ENCODE measurements at regions of chr11 and their contacts with region 1.

Region 1: GRCh38 chr11:2420502-2421225 is 20.1 kb downstream of the TSSC4 start:
- DNase-seq: peak; percentile 75
- ATAC-seq: peak; percentile 93
- H3K4me3 Mint-ChIP-seq: no peak overlapping the region
- H3K27ac Mint-ChIP-seq: no peak overlapping the region
- H3K4me1 Mint-ChIP-seq: no peaks in the 10 kb centered on the region
- H3K27me3 Mint-ChIP-seq: no peaks in the 10 kb centered on the region

Region 2: DNA sequence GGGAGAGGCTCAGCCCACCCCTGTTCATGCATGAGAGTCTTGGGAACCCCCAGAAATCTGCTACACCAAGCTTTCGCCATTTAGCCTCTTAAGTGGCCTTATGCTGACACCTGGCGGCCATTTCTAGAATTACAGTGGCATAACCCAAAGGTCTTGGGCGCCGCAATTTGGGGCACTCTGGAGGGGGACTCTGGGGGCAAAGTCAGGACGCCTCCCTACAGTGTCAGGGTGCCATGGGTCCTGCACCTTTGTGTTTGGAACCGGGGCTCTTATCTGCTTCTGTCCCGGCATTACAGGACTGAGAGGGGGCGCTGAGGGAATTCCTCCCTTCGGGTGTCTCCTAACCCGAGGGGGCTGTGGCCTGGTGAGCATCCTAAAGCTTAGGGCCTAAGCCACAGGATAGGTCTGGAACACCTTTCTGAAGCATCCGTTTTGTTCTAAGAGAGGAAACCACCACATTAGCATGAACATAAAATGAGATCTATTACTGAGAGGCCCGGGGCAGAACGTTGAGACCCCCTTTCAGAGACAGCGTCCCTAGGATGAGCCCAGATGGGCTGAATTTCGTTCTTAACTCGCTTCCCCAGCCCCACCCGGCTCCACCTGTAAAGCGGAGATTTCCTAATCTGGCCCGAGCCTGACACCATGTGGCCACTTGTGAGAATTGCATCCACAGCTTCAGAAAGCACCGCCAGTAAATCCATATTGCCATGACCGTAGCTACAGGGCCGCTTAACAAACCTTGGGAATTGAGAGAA is 269.0 kb before region 1 on chr11:
- CTCF ChIA-PET with region 1: interaction called, 11 read pairs
- DNase-seq: peak; percentile 85
- ATAC-seq: peak; percentile 77
- H3K4me3 Mint-ChIP-seq: no peak overlapping the region
- H3K27ac Mint-ChIP-seq: no peak overlapping the region
- H3K4me1 Mint-ChIP-seq: peaks cover 3% of the 10 kb centered on the region
- H3K27me3 Mint-ChIP-seq: peaks cover 37% of the 10 kb centered on the region

Region 3: GRCh38 chr11:2196970-2197770 is 223.5 kb before region 1 on chr11:
- CTCF ChIA-PET with region 1: interaction called, 45 read pairs
- DNase-seq: peak; percentile 83
- ATAC-seq: peak; percentile 86
- H3K4me3 Mint-ChIP-seq: no peak overlapping the region
- H3K27ac Mint-ChIP-seq: no peak overlapping the region
- H3K4me1 Mint-ChIP-seq: peaks cover 3% of the 10 kb centered on the region
- H3K27me3 Mint-ChIP-seq: peaks cover 9% of the 10 kb centered on the region

Region 4: GRCh38 chr11:2377511-2378443 is 42.9 kb before region 1 on chr11:
- CTCF ChIA-PET with region 1: interaction called, 16 read pairs
- DNase-seq: peak; percentile 68
- ATAC-seq: peak; percentile 46
- H3K4me3 Mint-ChIP-seq: peak overlapping the region; percentile 83
- H3K27ac Mint-ChIP-seq: peak overlapping the region; percentile 78
- H3K4me1 Mint-ChIP-seq: peaks cover 24% of the 10 kb centered on the region
- H3K27me3 Mint-ChIP-seq: peaks cover 4% of the 10 kb centered on the region

Region 5: DNA sequence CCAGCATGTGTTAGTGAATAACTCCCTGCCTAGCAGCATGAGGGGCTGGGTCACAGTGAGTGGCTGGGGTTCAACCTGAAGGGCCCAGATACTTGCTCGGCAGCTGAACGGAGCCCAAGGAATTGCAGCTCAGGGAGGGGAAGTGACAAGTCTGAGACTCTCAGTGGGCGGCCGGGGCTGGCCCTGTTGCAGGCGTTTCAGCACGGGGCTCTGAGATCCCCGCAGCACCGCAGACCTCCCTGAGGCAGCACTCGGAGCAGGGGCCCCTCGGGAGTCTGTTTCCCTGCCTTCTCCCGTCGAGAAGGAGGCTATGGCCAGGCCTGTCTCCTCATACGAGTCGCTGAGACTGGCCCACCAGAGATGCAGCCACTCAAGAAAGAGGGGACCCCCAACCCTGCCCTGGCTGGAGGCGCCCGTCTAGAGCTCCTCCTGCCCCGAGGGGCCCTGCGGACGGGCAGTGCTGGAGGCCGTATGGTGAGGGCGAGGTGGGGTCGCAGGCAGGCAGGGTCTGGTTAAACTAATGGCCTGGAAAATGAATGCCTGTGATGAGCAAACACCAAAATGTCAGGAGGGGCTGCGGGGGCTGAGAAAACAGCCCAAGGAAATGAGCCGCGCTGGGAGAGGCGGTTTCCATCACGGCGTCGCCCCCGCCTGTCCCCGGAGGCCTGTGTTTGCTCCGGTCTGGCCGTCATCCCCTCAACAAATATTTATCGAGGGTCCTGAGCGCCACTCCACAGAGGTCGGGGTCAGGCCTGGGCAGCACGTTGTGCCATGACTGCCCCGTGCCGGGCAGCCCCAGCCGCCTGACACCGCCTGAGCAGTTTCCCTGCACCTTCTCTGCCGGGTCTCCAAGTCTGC is 10.8 kb before region 1 on chr11:
- CTCF ChIA-PET with region 1: interaction called, 21 read pairs
- DNase-seq: no peak
- ATAC-seq: no peak
- H3K4me3 Mint-ChIP-seq: no peak overlapping the region
- H3K27ac Mint-ChIP-seq: no peak overlapping the region
- H3K4me1 Mint-ChIP-seq: no peaks in the 10 kb centered on the region
- H3K27me3 Mint-ChIP-seq: peaks cover 2% of the 10 kb centered on the region

Region 6: GRCh38 chr11:2724653-2725367 is 304.1 kb after region 1 on chr11:
- CTCF ChIA-PET with region 1: no interaction called
- DNase-seq: no peak
- ATAC-seq: no peak
- H3K4me3 Mint-ChIP-seq: no peak overlapping the region
- H3K27ac Mint-ChIP-seq: no peak overlapping the region
- H3K4me1 Mint-ChIP-seq: no peaks in the 10 kb centered on the region
- H3K27me3 Mint-ChIP-seq: no peaks in the 10 kb centered on the region

Region 7: GRCh38 chr11:2892215-2893020 is 471.8 kb after region 1 on chr11:
- CTCF ChIA-PET with region 1: interaction called, 15 read pairs
- DNase-seq: peak; percentile 81
- ATAC-seq: peak; percentile 74
- H3K4me3 Mint-ChIP-seq: peak overlapping the region; percentile 77
- H3K27ac Mint-ChIP-seq: peak overlapping the region; percentile 74
- H3K4me1 Mint-ChIP-seq: peaks cover 18% of the 10 kb centered on the region
- H3K27me3 Mint-ChIP-seq: peaks cover 4% of the 10 kb centered on the region

Measured in activated CD8-positive, alpha-beta memory T cell treated with anti-CD3 and anti-CD28 coated beads, Interleukin-2, amount 10 ng/mL, durations not matched to agents 7 days and 5 days (primary cell).